Activated CD4-positive, alpha-beta T cell treated with anti-CD3 and anti-CD28 coated beads, Interleukin-2, amount 10 ng/mL, durations not matched to agents 24 days and 14 days (primary cell): ENCODE measurements at regions of chr1 and their contacts with region 1.

Region 1: GRCh38 chr1:167776151-167776550 is 54.4 kb downstream of the MPZL1 start:
- DNase-seq: peak; percentile 41
- H3K4me3 Mint-ChIP-seq: no peak overlapping the region
- H3K27ac Mint-ChIP-seq: peak overlapping the region; percentile 23
- H3K4me1 Mint-ChIP-seq: peaks cover 31% of the 10 kb centered on the region
- H3K27me3 Mint-ChIP-seq: no peaks in the 10 kb centered on the region

Region 2: GRCh38 chr1:167721617-167722151 is 54.5 kb before region 1 on chr1 and contains the start of gene MPZL1:
- intact Hi-C with region 1: loop called (anchors 2 kb)
- DNase-seq: peak; percentile 99
- H3K4me3 Mint-ChIP-seq: peak within 1 kb of the TSS; percentile 96
- H3K27ac Mint-ChIP-seq: peak within 1 kb of the TSS; percentile 94
- H3K4me1 Mint-ChIP-seq: peaks cover 66% of the 10 kb centered on the region
- H3K27me3 Mint-ChIP-seq: no peaks in the 10 kb centered on the region
- total RNA-seq, gene MPZL1: 39.3 and 41.8 TPM in 2 replicates

Region 3: GRCh38 chr1:167797015-167797414 is 20.9 kb after region 1 on chr1:
- intact Hi-C with region 1: no loop called
- DNase-seq: peak; percentile 67
- H3K4me3 Mint-ChIP-seq: no peak overlapping the region
- H3K27ac Mint-ChIP-seq: peak overlapping the region; percentile 14
- H3K4me1 Mint-ChIP-seq: peaks cover 15% of the 10 kb centered on the region
- H3K27me3 Mint-ChIP-seq: no peaks in the 10 kb centered on the region

Region 4: DNA sequence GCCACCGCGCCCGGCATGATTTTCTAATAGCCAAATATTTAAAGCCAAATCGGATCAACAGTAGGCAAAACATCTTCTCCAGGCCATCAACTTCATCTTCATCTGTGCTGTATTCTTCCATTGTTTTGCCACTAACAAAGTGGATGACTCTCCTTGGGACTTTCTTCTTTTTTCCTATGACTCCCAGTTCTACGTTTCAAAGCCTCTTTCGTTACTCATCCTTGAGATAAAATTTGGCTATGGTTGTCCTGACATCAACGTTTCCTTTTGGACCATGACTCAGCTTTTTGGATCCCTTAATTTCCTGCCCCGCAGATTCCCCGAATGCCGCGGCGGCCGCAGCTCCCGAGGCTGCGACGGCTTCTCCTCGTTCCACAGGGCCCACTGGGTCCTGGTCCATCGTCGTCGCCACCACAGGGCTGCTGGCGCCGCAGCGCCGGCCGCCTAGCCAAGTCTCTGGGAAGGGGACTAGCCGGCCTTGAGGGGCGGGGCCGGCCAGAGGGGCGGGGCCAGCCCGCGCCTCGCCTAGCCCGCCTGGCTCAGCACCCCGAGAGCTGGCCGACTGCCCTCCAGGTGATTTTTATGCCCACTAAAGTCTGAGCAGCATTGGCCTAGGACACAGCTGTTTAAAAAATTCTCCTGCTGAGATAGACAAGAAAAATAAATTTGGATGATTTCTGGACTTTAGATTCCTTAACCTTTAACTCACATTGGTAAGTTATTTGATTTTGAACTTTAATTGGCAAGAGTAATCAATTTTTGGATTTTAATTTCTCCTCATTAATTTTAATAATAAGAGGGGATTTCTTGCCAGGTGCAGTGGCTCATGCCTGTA is 43.9 kb after region 1 on chr1:
- intact Hi-C with region 1: no loop called
- DNase-seq: peak; percentile 75
- H3K4me3 Mint-ChIP-seq: peak overlapping the region; percentile 86
- H3K27ac Mint-ChIP-seq: peak overlapping the region; percentile 69
- H3K4me1 Mint-ChIP-seq: peaks cover 11% of the 10 kb centered on the region
- H3K27me3 Mint-ChIP-seq: peaks cover 17% of the 10 kb centered on the region